H1 (cell line): ENCODE measurements at regions of chr14 and their contacts with region 1.

Region 1: DNA sequence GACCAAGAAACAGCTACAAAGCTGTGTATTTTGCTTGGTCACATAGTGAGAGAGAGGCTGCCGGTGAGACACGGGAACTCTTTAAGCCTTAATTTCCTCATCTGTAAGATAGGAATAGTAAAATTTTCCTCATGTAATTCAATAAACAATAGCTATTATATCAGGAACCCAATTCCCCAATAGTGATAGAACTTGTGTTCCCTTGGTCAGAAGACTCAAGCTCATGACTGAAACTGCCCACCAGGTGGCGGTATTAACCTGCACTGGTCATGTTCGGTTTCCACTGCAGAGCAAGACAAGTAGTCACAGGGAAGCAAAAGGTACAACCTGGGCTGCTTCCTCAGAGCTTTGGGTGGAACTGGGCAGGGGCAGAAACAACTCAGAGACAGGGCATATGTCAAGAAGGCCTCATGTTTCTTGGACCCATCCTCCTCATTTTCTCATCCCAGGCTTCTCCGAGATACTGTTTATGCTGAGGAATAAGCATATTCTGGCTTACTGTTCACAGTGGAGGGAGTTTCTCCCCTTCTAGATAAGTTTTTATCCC is 4.2 kb upstream of the AJUBA start:
- DNase-seq: peak in 1 of 2 experiments; percentile 95
- H3K4me3 ChIP-seq: no peak overlapping the region
- H3K27ac ChIP-seq: no peak overlapping the region
- H3K4me1 ChIP-seq: no peaks in the 10 kb centered on the region
- H3K27me3 ChIP-seq: peaks cover 0 to 2% (median under 1%) of the 10 kb centered on the region in 4 experiments; a peak in 1 of 7 replicates
- CTCF ChIP-seq: peak; percentile 74 to 96 (median 90)
- EP300 ChIP-seq: no peak
- POLR2A ChIP-seq: no peak
- RAD21 ChIP-seq: peak; percentile 94 to 96

Region 2: DNA sequence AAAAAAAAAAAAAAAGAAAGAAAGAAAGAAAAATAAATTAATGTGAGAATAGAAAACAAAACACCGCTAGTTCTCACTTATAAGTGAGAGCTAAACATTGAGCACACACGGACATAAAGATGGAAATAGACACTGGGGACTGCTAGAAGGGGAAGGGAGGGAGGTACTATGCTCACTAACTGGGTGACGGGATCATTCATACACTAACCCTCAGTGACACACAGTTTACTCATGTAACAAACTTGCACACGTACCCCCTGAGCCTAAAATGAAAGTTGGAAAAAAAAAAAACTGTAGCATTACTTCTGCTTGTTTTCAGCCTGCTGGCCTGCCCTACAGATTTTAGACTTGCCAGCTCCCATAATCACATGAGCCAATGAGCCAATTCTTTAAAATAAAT is 46.9 kb before region 1 on chr14:
- CTCF ChIA-PET with region 1: interaction called, 29 read pairs
- POLR2A ChIA-PET with region 1: interaction called, 7 read pairs
- DNase-seq: no peak
- H3K4me3 ChIP-seq: no peak overlapping the region
- H3K27ac ChIP-seq: no peak overlapping the region
- H3K4me1 ChIP-seq: no peaks in the 10 kb centered on the region
- H3K27me3 ChIP-seq: no peaks in the 10 kb centered on the region
- CTCF ChIP-seq: no peak
- EP300 ChIP-seq: no peak
- POLR2A ChIP-seq: no peak
- RAD21 ChIP-seq: no peak

Region 3: GRCh38 chr14:22973217-22974032 is 13.2 kb before region 1 on chr14:
- CTCF ChIA-PET with region 1: interaction called, 175 read pairs
- POLR2A ChIA-PET with region 1: interaction called, 133 read pairs
- DNase-seq: peak in 1 of 2 experiments; percentile 66
- H3K4me3 ChIP-seq: no peak overlapping the region
- H3K27ac ChIP-seq: no peak overlapping the region
- H3K4me1 ChIP-seq: peaks cover 13 to 20% (median 18%) of the 10 kb centered on the region in 4 experiments
- H3K27me3 ChIP-seq: no peaks in the 10 kb centered on the region
- CTCF ChIP-seq: peak in 2 of 3 experiments; percentile 75 to 76; a peak in 3 of 4 replicates
- EP300 ChIP-seq: no peak
- POLR2A ChIP-seq: no peak; a peak in 1 of 3 replicates
- RAD21 ChIP-seq: peak; percentile 84 to 88

Region 4: DNA sequence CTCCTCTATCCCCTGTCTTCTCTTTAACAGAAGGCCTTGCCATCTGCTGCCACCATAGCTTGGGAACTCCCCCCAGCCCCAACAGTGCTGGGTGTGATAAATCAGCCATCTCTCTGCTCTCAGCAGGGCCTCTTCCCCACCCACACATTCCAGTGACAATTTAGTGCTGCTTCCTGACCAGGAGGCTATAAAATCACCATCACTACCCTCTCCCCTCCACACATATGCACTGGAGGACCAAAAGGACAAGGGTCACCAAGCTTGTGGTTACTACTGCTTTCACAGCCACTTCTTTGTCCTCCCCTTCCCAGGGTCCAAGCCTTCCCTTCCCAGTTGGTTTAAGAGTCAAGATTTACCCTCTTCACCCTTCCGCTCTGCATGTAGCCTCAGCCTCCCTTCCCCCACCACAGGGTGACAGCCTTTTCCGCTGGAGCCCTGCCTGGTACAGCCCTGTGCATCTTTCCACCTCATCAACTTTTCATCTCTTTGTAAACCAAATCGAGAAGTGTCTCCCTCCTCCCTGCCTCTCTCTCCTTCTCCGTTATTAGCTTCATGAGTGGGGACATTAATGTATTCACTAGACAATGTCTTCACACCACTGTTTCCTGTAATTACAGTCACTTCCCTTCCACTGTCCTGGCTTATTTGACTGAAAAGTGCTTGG is 38.7 kb after region 1 on chr14:
- CTCF ChIA-PET with region 1: interaction called, 103 read pairs
- POLR2A ChIA-PET with region 1: interaction called, 9 read pairs
- DNase-seq: no peak
- H3K4me3 ChIP-seq: no peak overlapping the region
- H3K27ac ChIP-seq: no peak overlapping the region
- H3K4me1 ChIP-seq: peaks cover 0 to 3% (median under 1%) of the 10 kb centered on the region in 4 experiments; a peak in 1 of 7 replicates
- H3K27me3 ChIP-seq: no peaks in the 10 kb centered on the region
- CTCF ChIP-seq: no peak
- EP300 ChIP-seq: no peak
- POLR2A ChIP-seq: no peak
- RAD21 ChIP-seq: no peak

Region 5: GRCh38 chr14:23068476-23069412 is 82.2 kb after region 1 on chr14:
- CTCF ChIA-PET with region 1: interaction called, 785 read pairs
- POLR2A ChIA-PET with region 1: interaction called, 5 read pairs
- DNase-seq: peak; percentile 84 to 85
- H3K4me3 ChIP-seq: peak overlapping the region in 1 of 4 experiments; percentile 18; a peak in 1 of 8 replicates
- H3K27ac ChIP-seq: no peak overlapping the region
- H3K4me1 ChIP-seq: peaks cover 5 to 27% (median 15%) of the 10 kb centered on the region in 4 experiments; a peak in 6 of 7 replicates
- H3K27me3 ChIP-seq: no peaks in the 10 kb centered on the region
- CTCF ChIP-seq: peak; percentile 82 to 99 (median 99)
- EP300 ChIP-seq: no peak
- POLR2A ChIP-seq: no peak
- RAD21 ChIP-seq: peak; percentile 59 to 71

Region 6: DNA sequence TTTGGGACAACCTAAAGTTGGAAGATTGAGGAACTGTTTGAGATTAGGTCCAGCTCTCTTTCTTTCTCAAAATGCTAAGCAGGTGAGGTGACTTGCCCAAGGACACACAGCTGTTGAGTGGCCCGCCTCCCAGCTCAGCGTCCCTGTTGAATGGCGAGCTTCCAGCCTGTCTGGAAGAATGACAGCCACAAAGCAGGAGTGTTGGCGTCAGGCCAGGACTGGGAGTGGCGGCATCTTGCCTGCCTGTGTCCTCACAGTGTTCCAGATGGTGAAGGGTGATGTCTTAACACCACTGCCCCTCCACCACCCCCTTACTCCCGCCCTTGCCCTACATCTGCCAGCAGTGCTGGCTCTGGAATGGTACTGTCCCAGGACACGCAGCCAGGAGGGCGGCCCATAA is 136.8 kb after region 1 on chr14:
- CTCF ChIA-PET with region 1: no interaction called
- POLR2A ChIA-PET with region 1: no interaction called
- DNase-seq: no peak
- H3K4me3 ChIP-seq: no peak overlapping the region
- H3K27ac ChIP-seq: no peak overlapping the region
- H3K4me1 ChIP-seq: peaks cover 0 to 11% (median 5%) of the 10 kb centered on the region in 4 experiments; a peak in 5 of 7 replicates
- H3K27me3 ChIP-seq: no peaks in the 10 kb centered on the region
- CTCF ChIP-seq: no peak
- EP300 ChIP-seq: no peak
- POLR2A ChIP-seq: no peak
- RAD21 ChIP-seq: no peak

Region 7: GRCh38 chr14:23294734-23295561 is 308.4 kb after region 1 on chr14:
- CTCF ChIA-PET with region 1: no interaction called
- POLR2A ChIA-PET with region 1: no interaction called
- DNase-seq: peak in 1 of 2 experiments; percentile 56
- H3K4me3 ChIP-seq: no peak overlapping the region
- H3K27ac ChIP-seq: no peak overlapping the region
- H3K4me1 ChIP-seq: no peaks in the 10 kb centered on the region; a peak in 3 of 7 replicates
- H3K27me3 ChIP-seq: peaks cover 42 to 80% (median 73%) of the 10 kb centered on the region in 4 experiments
- CTCF ChIP-seq: peak; percentile 64 to 80 (median 66)
- EP300 ChIP-seq: 0 out of 3 replicates have a peak, but pooled peaks of 1 of the 2 experiments have one; percentile 12
- POLR2A ChIP-seq: no peak
- RAD21 ChIP-seq: peak; percentile 32 to 55; a peak in 2 of 4 replicates